Mucosa of descending colon (tissue), 3 donors: ENCODE measurements at regions of chr1 and their contacts with region 1.

Region 1: DNA sequence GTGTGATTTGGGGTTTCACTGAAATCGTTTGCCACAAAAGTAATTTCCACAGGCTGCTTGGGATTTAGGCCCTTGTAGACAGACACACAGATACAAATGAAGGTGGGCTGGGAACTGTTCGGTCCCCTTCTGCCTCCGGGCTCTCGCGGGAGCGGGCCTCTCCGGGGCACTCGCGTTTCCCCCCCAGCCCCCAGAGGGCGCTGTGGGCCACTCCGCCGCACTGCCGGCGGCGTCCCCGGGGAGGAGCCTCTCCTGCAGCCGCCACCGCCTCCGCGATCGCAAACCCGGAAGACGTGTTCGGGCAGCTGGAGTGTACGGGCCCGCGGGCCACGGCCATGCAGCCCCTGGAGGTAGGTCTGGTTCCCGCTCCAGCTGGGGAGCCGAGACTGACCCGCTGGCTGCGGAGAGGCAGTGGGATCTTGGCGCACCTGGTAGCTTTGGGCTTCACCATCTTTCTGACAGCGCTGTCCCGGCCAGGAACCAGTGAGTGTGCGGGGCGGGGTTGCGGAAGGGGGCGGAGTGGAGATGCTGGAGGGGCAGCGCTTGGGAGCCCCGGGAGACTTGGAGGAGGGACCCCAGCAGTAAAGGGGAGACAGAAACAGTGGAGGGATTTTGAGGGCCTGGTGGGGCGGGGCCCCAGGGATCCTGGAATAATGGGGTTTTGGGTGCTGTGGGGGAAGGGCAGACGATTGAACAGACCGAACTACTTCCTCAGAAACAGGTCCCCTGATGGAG is at the start of gene CYB561D1:
- DNase-seq: peak; percentile 86 to 93 (median 92)
- ATAC-seq: peak; percentile 98
- H3K4me3 ChIP-seq: peak within 1 kb of the TSS; percentile 67
- H3K4me1 ChIP-seq: peaks cover 12% of the 10 kb centered on the region
- CTCF ChIP-seq: peak; percentile 98
- total RNA-seq, gene CYB561D1: 16.0 to 18.7 (median 18.1) TPM

Region 2: DNA sequence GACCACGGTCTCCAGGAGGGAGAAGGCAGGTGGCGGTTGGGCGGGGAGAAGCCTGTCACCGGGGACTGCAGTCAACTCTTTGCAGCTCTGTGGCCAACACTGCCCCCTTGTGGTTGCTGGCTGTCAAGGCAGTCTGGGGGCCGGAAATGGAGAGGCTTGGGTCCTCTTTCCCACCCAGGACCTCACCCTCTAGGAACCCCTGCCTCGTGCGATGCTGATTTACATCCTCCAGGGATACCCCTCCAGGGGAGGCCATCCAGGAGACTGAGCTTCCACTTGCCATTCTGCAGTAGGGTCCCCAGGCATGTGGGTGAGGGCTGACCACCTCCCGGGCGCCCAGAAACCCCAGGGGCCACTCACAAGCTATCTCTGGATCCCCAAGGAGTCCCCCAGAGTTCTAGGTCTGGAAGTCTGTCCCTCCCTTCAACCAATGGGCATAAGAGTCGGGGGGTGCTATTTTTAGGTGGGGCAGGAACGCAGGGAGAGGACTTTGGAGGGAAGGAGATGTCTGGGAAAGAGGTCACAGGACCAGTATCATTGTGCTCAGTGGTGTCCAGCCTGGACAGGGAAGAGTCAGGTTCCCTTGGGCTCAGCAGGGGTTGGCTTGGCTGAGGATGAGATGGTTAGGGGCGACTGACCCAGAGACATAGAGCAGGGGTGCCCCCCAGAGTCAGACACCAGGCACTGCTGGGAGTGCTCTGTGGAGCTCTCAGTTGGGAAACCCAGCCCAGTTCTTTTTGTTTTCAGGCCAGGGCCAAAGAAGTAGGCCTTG is 38.6 kb after region 1 on chr1:
- intact Hi-C with region 1: loop called in 1 of 2 experiments (anchors 5 kb)
- DNase-seq: peak; percentile 85 to 91 (median 86)
- ATAC-seq: peak; percentile 95
- H3K4me3 ChIP-seq: no peak overlapping the region
- H3K4me1 ChIP-seq: no peaks in the 10 kb centered on the region
- CTCF ChIP-seq: peak; percentile 94